K562 (cell line): ENCODE measurements at regions of chr9 and their contacts with region 1.

Region 1: DNA sequence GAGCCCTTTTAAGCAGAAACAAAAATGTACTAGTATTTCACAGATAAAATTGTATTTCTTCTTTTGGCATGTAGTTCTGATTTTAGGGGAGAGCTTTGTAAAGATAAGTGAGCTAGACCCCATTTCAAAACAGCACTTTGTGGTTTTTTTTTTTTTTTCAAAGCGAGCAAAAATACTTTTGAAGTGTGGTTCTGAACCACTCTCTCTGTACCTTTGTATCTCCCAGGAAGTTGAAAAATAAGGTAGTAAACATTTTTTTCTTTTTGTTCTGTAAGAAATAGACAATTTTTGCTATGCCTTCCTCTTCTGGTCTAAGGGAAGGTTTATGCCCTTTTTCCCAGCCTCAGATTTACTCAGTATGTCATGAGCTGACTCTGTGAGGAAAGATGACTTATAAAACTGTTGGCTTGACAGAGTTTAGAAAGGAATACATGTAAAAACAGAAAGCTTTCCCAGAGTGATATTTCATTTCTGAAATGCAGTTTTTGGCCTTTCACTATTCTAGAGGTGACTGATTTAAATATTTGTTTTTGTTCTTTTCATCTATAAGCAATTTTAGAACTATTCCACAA is 12.5 kb downstream of the ERCC6L2 start:
- DNase-seq: no peak
- ATAC-seq: no peak
- H3K4me3 ChIP-seq: no peak overlapping the region
- H3K27ac ChIP-seq: no peak overlapping the region
- H3K4me1 ChIP-seq: no peaks in the 10 kb centered on the region
- H3K27me3 ChIP-seq: no peaks in the 10 kb centered on the region
- CTCF ChIP-seq: no peak
- EP300 ChIP-seq: no peak
- POLR2A ChIP-seq: no peak
- RAD21 ChIP-seq: no peak

Region 2: DNA sequence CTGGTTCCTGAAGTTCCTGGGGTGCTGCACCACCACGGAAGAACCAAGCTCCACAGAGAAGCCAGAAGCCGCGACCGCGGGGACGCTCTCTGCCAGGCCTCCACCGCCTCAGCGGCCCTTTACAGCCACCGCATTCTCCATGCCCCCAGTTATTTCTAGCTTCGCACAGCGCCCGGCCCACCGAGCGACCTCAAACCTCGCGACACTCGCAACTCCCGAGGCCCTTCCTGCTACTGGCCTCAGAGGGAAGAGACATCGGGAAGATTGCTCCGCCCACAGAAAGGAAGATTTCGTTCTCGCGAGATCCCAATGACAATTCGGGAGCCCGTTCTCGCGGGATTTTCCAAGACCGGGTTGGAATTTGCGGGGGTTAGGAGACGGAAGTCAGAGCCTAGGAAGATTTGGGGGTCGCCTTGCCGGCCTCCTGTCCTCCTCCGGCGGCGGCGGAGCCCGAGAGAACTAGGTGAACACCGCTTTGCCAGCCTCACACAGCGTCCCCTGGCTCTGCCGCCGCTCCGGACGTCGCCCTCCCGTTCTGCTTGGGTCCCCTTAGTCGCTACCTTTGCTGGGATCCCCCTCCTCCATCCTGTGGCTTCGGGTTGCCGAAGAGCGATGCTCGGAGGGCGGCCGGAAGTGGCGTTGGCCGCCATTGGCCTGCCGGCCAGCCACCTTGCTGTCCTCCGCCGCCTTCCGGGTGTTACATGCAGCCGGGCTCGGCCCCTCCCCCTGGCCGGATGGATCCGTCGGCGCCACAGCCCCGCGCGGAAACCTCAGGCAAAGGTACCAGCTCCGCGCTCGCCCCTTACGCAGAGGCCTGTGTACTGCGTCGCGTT is 12.5 kb before region 1 on chr9 and contains the start of gene ERCC6L2:
- CTCF ChIA-PET with region 1: no interaction called
- POLR2A ChIA-PET with region 1: interaction called, 18 read pairs
- in situ Hi-C with region 1: no loop called
- intact Hi-C with region 1: no loop called
- DNase-seq: peak; percentile 86 to 97 (median 89)
- ATAC-seq: peak; percentile 94
- H3K4me3 ChIP-seq: no peak within 1 kb of the TSS
- H3K27ac ChIP-seq: no peak within 1 kb of the TSS
- H3K4me1 ChIP-seq: peaks cover 4 to 11% of the 10 kb centered on the region in 2 experiments; a peak in 2 of 5 replicates
- H3K27me3 ChIP-seq: no peaks in the 10 kb centered on the region
- CTCF ChIP-seq: peak in 2 of 3 experiments; percentile 4 to 55; a peak in 3 of 6 replicates
- EP300 ChIP-seq: no peak
- POLR2A ChIP-seq: peak; percentile 97
- RAD21 ChIP-seq: peak; percentile 18 to 24; a peak in 3 of 4 replicates
- polyA plus RNA-seq, gene ERCC6L2: 7.8 to 9.6 TPM

Region 3: DNA sequence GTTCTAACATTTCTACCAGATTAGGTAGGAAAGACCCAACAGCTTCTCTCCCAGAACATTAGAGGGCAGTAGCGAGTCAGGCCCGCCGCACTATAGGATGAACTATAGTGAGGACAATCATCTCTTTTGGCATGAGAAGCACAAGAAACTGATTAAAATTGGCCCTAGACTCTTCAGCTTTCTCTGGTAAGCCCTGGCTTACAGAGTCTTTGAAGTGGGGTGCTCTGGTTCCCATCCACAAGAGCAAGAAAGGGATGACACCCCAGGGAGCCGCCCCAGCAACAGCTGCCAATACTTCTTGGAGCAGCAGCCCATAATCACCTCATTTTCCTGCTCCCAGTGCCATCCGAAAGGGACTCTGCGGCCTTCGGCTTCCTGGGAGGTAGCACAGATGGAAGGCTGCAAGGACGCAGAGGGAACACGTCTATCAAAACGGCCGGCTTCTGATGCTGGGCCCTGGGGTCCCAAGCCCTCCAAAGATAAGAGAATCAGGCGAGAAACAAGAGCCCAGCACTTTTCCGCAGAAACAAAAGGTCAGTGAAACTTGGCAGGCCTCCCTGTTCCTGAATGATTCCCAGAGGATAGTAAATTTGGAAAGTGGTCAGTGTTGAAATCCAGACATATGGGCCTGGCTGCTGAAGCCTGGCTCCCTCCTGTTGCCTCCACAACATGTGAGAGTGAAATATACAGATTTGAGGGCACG is 344.7 kb after region 1 on chr9:
- CTCF ChIA-PET with region 1: no interaction called
- POLR2A ChIA-PET with region 1: no interaction called
- in situ Hi-C with region 1: no loop called
- intact Hi-C with region 1: no loop called
- DNase-seq: peak; percentile 32 to 62 (median 48)
- ATAC-seq: peak; percentile 93
- H3K4me3 ChIP-seq: no peak overlapping the region
- H3K27ac ChIP-seq: no peak overlapping the region
- H3K4me1 ChIP-seq: no peaks in the 10 kb centered on the region; a peak in 1 of 5 replicates
- H3K27me3 ChIP-seq: peaks cover 2 to 13% of the 10 kb centered on the region in 2 experiments; a peak in 3 of 5 replicates
- CTCF ChIP-seq: peak; percentile 75 to 88 (median 88)
- EP300 ChIP-seq: no peak
- POLR2A ChIP-seq: no peak
- RAD21 ChIP-seq: peak; percentile 53 to 81